BJ (cell line): ENCODE measurements at regions of chr6 and their contacts with region 1.

Region 1: DNA sequence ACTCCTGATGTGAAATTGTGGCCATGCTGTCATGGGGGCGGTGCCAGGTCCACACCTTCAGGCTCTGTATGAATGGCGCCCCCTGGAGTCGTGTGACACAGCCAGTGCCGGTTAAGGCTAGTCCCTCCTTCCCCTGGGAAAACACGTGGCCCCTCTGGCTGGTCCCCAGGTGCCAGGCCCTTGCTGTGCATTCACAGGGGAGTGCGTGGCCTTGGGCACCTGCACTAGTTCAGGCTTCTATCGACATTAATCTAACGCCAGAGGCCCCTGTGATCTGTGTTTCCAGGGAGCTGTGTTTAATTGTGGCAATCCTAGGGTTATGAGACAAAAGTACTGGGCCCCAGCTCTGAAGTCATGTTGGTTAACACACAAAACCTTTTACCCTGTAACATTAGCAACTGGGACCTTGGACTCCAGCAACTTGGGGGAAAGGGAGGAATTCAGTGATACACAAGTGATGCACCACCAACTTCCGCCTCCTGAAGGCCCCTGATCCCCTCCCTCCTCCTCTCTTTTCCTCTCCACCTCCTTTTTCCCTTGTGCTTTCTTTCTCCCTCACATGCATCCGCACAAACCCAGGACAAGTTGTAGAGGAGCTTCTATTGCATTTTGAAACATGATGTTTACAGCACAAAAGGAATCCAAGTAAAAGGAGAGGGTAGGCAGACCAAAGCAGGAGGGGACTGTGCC is 74.0 kb downstream of the SSR1 start:
- DNase-seq: no peak
- H3K4me3 ChIP-seq: no peak overlapping the region
- H3K27me3 ChIP-seq: no peaks in the 10 kb centered on the region
- CTCF ChIP-seq: peak; percentile 69

Region 2: DNA sequence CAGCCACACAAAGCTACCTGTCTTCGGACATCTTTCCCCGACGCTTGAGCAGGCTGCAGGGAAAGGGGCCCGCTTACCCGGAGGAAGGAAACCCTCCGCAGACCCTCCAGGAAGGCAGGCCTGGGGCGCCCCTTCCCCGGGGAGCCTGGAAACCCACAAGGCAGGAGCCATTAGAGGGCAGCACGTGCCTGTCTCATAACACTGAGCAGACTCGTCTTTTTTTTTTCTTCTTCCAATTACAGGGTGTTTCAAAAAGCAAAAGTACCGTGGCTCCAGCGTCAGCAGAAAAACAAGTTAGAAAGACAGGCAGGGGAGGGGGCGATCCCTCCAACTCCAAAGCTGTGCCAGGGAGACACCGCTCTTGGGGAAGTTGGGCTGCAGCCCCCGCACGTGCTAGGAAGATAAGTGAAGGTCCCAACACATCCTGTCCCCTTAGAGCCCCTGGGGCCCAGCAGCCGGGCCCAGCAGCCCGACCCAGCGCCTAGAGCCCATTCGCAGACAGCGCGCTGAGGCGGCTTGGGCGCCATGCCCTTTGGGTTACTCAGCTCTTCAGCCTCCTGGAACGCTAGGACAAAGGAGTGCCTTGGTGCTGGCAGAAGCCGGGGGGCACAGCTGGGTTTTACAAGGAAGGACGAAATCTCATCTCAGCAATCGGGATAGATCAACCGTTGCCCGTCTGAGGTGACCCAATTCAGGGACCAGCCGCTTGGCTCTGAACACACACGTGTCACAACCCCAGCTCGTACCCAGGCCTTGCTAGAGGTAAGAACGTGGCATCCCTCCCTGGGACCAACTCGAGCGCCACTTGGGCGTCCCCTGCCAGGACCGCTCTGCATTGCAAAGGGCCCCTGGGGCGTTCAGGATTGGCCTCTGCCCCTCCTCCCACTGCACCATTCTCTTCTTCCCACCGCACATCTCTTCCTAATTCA is 514.2 kb before region 1 on chr6:
- CTCF ChIA-PET with region 1: interaction called, 53 read pairs
- POLR2A ChIA-PET with region 1: no interaction called
- DNase-seq: no peak
- H3K4me3 ChIP-seq: peak overlapping the region; percentile 34
- H3K27me3 ChIP-seq: no peaks in the 10 kb centered on the region
- CTCF ChIP-seq: peak; percentile 64

Region 3: DNA sequence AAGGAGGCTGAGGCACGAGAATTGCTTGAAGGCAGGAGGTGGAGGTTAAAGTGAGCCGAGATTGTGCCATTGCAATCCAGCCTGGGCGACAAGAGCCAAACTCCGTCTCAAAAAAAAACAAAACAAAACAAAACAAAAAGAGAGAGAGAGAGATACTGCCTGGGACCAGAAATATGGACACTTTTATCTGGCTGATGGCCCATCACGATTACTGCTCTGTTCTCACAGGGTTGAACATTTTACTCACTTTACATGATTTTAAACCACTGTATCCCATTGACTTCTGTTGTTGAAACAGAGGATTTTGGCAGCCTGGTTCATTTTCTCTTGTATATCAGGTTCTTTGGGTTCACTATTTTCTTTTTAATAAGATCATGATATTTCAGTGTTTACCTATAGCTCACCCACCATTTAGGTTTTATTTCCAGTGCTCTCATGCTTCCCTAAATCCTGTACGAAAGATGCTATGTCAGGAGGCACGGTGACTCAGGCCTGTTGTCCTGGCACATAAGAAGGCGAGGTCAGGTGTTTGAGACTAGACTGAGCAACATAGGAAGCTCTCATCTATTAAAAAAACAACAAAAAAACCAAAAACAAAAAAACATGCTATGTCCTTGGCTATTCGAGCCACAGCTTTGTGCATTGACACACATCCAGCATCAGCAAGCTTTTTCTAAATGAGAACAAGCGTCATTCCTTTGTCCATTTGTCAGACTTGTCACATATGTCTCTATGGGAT is 165.8 kb before region 1 on chr6:
- CTCF ChIA-PET with region 1: no interaction called
- POLR2A ChIA-PET with region 1: no interaction called
- DNase-seq: no peak
- H3K4me3 ChIP-seq: no peak overlapping the region
- H3K27me3 ChIP-seq: no peaks in the 10 kb centered on the region
- CTCF ChIP-seq: no peak

Region 4: GRCh38 chr6:7254980-7255835 is 16.2 kb after region 1 on chr6:
- CTCF ChIA-PET with region 1: interaction called, 13 read pairs
- POLR2A ChIA-PET with region 1: no interaction called
- DNase-seq: no peak
- H3K4me3 ChIP-seq: no peak overlapping the region
- H3K27me3 ChIP-seq: no peaks in the 10 kb centered on the region
- CTCF ChIP-seq: no peak

Region 5: DNA sequence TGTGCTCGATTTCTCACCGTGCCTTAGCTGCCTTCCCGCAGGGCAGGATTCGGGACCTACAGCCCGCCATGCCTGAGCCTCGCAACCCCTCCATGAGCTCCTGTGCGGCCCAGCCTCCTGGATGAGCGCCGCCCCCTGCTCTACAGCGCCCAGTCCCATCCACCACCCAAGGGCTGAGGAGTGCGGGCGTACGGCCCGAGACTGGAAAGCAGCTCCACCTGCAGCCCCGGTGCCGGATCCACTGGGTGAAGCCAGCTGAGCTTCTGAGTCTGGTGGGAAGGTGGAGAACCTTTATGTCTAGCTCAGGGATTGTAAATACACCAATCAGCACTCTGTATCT is 105.3 kb after region 1 on chr6:
- CTCF ChIA-PET with region 1: no interaction called
- POLR2A ChIA-PET with region 1: no interaction called
- DNase-seq: no peak
- H3K4me3 ChIP-seq: no peak overlapping the region
- H3K27me3 ChIP-seq: no peaks in the 10 kb centered on the region; the same call in 1 of the 2 replicates
- CTCF ChIP-seq: no peak

Region 6: GRCh38 chr6:8758412-8758811 is 1519.4 kb after region 1 on chr6:
- CTCF ChIA-PET with region 1: no interaction called
- POLR2A ChIA-PET with region 1: no interaction called
- DNase-seq: no peak
- H3K4me3 ChIP-seq: no peak overlapping the region
- H3K27me3 ChIP-seq: no peaks in the 10 kb centered on the region
- CTCF ChIP-seq: no peak